ENCODE measurements at regions of chr2 and their contacts with region 1.

Region 1: DNA sequence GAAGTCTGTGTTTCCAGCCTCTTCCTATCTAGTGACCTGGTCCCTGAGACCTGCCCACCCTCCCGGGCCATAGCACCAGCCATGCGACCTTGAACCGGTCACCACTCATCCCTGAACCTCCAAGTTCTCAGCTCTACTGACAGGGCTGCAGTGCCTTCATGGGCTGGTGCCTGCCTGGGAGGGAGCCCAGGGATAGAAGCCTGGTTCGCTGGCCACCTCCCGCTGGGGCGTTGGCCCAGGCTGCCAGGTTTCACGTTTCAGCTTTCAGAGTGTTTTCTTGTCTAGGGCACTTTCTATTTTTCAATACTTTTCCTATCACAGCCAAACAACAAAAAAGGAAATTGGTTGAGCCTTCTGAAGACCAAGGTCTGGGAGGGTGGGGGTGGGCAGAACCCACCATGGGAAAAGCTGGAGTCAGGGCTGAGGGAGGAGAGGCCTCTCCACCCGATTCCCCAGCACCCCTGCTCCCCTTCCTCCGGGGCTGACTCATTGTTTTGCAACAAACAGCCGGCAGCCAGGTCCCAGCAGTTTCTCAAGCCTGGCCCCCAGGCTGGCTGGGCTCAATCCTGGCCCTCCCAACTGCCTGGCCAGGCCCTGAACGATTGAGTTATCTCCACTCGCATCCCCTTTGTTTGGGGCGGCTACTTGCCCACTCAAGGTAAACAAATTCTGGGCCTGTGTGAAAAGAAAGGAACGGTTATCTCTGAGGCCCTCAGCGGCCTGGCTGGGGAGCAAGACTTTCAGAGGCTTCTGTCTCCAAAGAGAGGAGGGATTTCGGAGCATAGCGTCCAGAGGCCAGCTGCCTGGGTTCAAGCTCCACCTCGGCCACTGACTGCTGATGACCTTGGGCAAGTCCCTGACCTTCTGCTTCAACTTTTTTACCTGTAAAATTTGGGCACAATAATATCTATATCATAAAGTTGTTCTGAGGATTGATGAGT is 47.5 kb downstream of the ZFP36L2 start:
- DNase-seq: no peak
- ATAC-seq: no peak
- H3K4me3 Mint-ChIP-seq: no peak overlapping the region
- H3K27ac Mint-ChIP-seq: peak overlapping the region; percentile 46
- H3K4me1 Mint-ChIP-seq: peaks cover 60% of the 10 kb centered on the region
- H3K27me3 Mint-ChIP-seq: no peaks in the 10 kb centered on the region
- CTCF ChIP-seq: no peak

Region 2: DNA sequence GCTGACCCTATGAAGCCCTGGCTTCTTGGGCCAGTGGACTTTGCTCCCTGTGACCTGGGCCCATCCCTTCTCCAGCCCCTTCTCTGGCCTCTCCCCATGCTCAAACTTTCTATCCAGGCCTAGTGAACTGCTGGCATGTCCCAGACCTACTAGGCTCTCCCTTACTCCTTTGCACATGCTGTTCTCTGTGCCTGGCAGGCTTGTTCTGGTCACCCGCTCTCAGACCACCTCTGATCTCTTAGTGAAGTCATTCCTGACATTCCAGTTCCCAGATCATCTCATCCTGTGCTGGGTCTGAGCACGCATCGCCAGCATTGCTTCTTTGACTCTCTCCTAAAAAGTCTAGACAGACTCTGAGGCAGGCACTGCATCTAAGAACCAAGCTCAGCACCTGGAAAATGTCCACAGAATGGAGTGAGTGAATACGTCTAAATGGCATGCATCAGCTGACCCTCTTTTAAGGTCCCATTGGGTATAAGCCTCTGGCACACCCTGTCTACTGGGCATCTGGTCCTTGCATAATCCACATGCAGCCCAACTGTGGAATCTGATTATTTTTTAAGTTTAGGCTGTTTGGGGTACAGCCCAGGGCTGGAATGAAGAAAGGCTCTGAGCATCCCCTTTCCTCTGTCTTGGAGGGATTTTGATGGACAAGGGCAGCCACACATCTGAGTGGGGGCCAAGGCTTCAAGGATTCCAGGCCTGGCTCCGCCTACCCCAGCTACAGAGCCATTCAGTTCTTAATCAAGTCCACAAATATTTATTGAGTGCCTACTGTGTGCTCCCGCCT is 255.9 kb before region 1 on chr2:
- CTCF ChIA-PET with region 1: no interaction called
- POLR2A ChIA-PET with region 1: no interaction called
- intact Hi-C with region 1: no loop called
- DNase-seq: no peak
- ATAC-seq: no peak
- H3K4me3 Mint-ChIP-seq: no peak overlapping the region
- H3K27ac Mint-ChIP-seq: no peak overlapping the region
- H3K4me1 Mint-ChIP-seq: no peaks in the 10 kb centered on the region
- H3K27me3 Mint-ChIP-seq: no peaks in the 10 kb centered on the region
- CTCF ChIP-seq: no peak

Region 3: GRCh38 chr2:43139996-43140621 is 38.8 kb before region 1 on chr2:
- CTCF ChIA-PET with region 1: interaction called, 8 read pairs
- POLR2A ChIA-PET with region 1: interaction called, 12 read pairs
- intact Hi-C with region 1: loop called (anchors 5 kb)
- DNase-seq: peak; percentile 77
- ATAC-seq: peak; percentile 37
- H3K4me3 Mint-ChIP-seq: peak overlapping the region; percentile 55
- H3K27ac Mint-ChIP-seq: peak overlapping the region; percentile 87
- H3K4me1 Mint-ChIP-seq: peaks cover 74% of the 10 kb centered on the region
- H3K27me3 Mint-ChIP-seq: no peaks in the 10 kb centered on the region
- CTCF ChIP-seq: no peak

Region 4: DNA sequence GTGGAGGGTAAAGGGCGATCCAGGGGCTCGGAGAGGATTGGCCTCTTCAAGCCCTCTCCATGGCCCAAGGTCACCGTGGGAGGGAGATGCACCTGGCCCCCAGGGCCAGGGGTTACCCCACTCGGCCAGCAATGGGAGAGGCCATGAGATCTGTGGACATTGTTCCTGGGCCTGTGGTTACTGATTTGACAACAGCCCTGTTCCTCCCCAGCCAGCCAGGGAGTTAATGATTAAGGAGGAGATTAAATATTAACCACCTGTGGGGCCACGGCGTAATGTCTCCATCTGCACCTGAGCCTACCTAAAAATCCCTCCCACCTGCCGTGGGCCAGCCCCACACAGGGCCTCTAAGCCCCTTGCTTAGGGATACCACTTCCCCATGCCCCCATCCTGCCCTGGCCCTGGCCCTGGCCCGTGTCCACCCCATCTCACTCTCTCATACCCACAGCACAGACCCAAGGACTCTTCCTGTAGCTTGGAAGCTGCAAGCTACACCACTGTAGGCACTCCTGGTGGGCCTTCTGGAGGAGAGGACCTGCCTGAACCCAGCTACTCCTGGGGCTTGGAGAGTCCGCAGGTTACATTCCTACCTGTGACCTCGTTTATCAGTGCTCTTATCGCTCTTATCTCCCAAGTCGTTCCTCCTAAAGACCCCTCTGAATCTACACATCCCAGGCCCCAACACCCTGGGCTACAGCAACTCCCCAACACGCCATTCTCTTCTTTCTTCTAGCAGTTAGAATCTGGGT is 15.4 kb after region 1 on chr2:
- CTCF ChIA-PET with region 1: interaction called, 11 read pairs
- POLR2A ChIA-PET with region 1: interaction called, 12 read pairs
- intact Hi-C with region 1: loop called (anchors 2 kb)
- DNase-seq: no peak
- ATAC-seq: no peak
- H3K4me3 Mint-ChIP-seq: peak overlapping the region; percentile 67
- H3K27ac Mint-ChIP-seq: peak overlapping the region; percentile 87
- H3K4me1 Mint-ChIP-seq: peaks cover 56% of the 10 kb centered on the region
- H3K27me3 Mint-ChIP-seq: no peaks in the 10 kb centered on the region
- CTCF ChIP-seq: no peak